ENCODE measurements at regions of chr15 and their contacts with region 1.

Region 1: DNA sequence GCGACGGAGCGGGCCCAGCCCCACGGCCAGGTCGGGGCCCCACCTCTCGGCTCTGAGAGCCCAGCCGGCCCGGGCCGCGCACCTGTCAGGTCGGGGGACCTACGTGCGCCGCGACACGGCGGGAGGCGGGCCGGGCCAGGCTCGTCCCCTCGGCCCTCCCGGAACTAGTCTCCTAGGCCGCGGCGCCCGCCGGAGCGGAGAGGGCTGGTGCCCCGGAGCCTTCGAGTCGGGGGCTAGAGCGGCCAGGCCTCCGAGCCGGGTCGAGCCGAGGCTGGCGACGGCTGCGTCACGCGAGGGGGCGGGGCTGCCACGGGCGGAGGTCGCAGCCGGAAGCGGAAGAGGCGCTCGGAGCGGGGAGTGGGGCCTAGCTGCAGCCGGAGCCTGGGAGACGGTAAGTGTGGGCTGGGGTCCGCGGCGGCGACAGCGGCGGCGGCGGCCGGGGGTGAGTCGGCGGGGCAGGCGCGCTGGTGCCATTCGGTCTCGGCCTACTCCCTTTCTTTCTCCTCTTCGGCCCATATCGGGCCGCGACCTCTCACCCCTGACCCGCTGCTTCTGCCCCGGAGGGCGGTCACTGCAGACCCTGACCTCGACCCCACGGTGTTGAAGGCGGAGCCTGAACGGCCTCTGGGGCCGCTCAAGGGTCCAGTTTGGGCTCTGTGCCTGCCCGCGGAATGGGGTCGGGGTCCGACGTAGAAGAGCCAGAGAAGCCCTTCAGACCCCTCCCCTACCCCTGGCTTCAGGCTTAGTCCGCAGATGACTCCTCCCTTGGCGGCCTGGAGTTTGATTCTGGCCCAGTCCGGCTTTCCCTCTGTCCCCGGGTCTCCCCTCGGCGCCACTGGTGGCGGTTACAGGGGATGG is at the start of gene CLK3:
- DNase-seq: peak; percentile 96 to 98 (median 98)
- ATAC-seq: peak; percentile 70 to 90 (median 85)
- H3K4me3 ChIP-seq: peak within 1 kb of the TSS; percentile 68 to 100 (median 92)
- H3K27ac ChIP-seq: peak within 1 kb of the TSS; percentile 92 to 100 (median 97)
- H3K4me1 ChIP-seq: peaks cover 3 to 70% (median 39%) of the 10 kb centered on the region in 12 donors
- H3K27me3 ChIP-seq: no peaks in the 10 kb centered on the region
- CTCF ChIP-seq: no peak
- POLR2A ChIP-seq: peak in 1 of 2 donors; percentile 85
- total RNA-seq, gene CLK3: 32.8 to 75.9 (median 49.9) TPM

Region 2: DNA sequence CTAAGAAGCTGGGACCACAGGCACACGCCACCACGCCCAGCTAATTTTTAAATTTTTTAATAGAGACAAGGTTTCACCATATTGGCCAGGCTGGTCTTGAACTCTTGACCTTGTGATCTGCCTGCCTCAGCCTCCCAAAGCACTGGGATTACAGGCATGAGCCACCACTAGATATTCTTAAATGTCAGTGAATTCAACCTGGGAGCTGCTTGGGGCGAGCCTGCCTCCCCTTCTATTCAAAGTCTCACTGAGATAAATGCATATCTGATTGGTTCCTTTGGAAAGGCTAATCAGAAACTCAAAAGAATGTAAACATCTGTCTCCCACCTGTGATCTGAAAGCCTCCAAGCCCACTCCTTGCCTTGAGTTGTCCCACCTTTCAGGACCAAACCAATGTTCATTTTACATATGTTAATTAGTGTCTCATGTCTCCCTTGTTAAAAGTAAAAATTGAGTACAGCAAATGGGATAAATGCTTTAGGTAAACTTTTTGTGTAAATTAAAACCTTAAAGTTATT is 263.3 kb before region 1 on chr15:
- intact Hi-C with region 1: no loop called
- DNase-seq: no peak
- ATAC-seq: no peak
- H3K4me3 ChIP-seq: no peak overlapping the region
- H3K27ac ChIP-seq: no peak overlapping the region
- H3K4me1 ChIP-seq: no peaks in the 10 kb centered on the region
- H3K27me3 ChIP-seq: peaks cover 0 to 13% (median 0%) of the 10 kb centered on the region in 9 donors
- CTCF ChIP-seq: no peak
- POLR2A ChIP-seq: no peak

Region 3: DNA sequence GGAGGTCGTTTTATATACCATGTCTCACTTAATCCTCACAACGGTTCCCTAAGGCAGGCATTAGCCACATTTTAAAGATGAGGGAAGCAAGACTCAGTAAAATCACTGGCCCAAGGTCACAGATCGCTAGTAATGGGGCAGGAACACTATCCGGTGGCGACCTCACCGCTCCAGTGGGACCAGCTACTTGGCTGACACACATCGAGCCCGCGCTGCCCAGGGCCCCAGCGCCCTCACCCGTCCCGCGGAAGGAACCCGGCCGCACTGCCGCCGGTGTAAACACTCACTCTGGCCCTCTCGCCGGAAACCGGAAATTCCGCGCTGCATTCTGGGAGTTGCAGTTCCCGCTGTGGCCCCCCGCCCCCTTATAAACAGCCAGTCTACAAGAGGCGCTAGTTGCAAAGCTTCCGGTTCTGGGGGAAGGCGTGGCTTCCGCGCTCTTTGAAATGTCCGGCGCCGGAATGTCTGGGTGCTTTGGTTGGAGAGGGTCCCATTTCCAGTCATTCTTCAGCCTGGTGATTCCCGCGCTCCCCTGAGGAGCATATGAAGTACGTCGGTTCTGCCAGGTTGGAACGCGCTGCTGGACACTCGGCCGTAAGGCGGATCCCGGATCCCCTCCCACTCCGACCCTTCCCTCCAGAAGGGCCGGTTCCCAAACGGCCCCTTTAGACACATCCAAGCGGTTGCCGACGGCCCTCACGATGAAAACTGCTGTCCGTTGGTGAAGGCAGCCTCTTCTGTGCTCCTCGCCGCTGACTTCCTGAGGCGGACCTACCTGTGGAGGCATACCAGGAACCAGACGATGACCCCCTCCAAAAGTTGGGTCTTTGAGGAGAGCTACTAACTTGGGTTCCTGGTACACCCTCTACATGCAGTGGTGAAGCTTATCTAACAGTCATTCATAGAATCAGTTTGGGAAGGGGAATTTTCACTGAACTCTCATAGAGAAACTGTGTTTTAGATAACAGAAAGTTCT is 154.6 kb before region 1 on chr15 and contains the start of gene UBL7:
- intact Hi-C with region 1: loop called in 7 of 10 experiments (anchors 5 to 10 kb)
- DNase-seq: peak; percentile 97 to 98 (median 97)
- ATAC-seq: peak; percentile 99 to 100 (median 100)
- H3K4me3 ChIP-seq: peak within 1 kb of the TSS; percentile 57 to 96 (median 78)
- H3K27ac ChIP-seq: peak within 1 kb of the TSS; percentile 49 to 94 (median 86)
- H3K4me1 ChIP-seq: peaks cover 0 to 22% (median 11%) of the 10 kb centered on the region in 12 donors
- H3K27me3 ChIP-seq: no peaks in the 10 kb centered on the region
- CTCF ChIP-seq: peak in 5 of 12 donors; percentile 19 to 47 (median 32)
- POLR2A ChIP-seq: peak; percentile 27 to 88
- total RNA-seq, gene UBL7: 40.6 to 102 (median 54.5) TPM

Region 4: GRCh38 chr15:74525946-74526345 is 89.8 kb before region 1 on chr15:
- intact Hi-C with region 1: no loop called
- DNase-seq: no peak
- ATAC-seq: no peak
- H3K4me3 ChIP-seq: no peak overlapping the region
- H3K27ac ChIP-seq: no peak overlapping the region
- H3K4me1 ChIP-seq: peaks cover 0 to 8% (median 0%) of the 10 kb centered on the region in 12 donors
- H3K27me3 ChIP-seq: no peaks in the 10 kb centered on the region
- CTCF ChIP-seq: no peak
- POLR2A ChIP-seq: no peak

Region 5: DNA sequence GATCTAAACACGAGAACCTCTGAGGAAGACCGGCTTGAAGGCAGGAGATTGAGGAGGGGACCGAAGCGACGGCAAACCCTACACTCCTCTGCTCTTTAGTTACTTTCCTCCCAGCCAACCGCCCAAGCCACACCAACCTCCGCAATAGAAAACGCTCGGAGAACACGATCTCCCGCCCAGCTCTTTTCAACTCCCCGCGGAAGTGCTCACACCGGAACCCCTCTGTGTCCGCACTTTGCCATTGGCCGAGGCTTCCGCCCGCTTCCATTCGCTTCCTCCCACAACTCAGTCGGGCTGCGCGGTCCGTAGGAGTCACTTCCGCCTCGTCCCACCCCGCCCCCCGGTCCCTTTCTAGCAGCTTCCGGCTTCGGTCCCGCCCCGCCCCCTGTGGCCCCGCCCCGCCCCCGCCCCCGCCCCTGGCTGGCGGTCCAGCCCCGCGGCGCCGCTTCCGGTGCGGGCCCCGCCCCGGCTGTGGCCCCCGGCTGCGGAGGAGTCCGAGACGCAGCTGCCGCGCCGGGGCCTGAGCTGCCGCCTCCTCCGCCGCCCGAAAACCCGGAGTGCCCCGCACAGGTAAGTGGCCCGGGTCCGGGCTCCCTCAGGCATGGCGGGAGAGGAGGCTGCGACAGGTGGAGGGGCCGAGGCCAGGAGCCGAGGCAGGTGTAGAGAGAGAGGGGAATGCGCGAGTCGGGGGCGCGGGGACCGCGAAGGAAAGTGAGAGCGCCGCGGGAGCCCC is 74.8 kb before region 1 on chr15 and contains the start of gene ARID3B:
- intact Hi-C with region 1: loop called in 9 of 10 experiments (anchors 1 to 5 kb)
- DNase-seq: peak; percentile 98 to 99 (median 98)
- ATAC-seq: peak; percentile 99 to 100 (median 100)
- H3K4me3 ChIP-seq: peak within 1 kb of the TSS; percentile 79 to 99 (median 92)
- H3K27ac ChIP-seq: peak within 1 kb of the TSS in 11 of 12 donors; percentile 62 to 88 (median 79)
- H3K4me1 ChIP-seq: peaks cover 0 to 43% (median 20%) of the 10 kb centered on the region in 12 donors
- H3K27me3 ChIP-seq: no peaks in the 10 kb centered on the region
- CTCF ChIP-seq: no peak
- POLR2A ChIP-seq: peak in 1 of 2 donors; percentile 46
- total RNA-seq, gene ARID3B: 1.3 to 4.3 (median 2.6) TPM

Region 6: DNA sequence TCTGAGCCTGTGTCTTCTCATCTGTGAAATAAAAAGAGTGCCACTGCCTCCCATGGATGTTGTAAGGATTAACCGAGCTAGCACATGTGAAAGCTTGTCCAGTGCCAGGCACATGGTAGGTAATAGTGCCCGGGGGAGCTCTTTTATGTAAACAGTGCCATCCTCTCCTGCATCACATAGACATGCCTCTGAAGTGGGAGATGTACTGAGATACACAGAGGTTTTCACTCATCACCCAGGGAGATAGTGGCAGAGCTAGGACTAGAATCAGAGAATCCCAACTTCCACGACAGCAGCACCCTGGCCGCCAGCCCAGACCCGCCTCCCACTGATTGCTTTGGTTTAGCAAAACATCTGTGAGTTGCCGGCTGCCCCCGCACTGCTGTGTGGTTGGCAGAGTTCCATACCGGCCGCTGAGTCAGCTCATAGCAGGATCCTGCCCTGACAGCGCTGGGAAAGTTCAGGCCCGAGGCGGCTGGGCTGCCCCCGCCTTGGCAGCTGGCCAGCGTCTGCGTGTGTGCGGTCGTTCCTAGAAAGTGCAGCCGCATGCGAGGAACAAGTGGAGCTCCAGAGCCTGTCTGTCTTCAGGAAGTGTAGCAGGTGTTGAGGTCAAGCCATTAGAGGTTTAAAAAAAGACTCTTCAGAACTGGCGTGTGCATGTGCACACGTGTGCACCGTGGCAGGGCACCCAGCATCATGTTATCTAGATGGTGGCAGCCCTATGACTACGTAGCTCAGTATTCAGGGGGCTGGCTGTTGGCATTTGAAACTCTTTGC is 69.7 kb before region 1 on chr15:
- intact Hi-C with region 1: loop called in 9 of 10 experiments (anchors 1 to 5 kb)
- DNase-seq: peak; percentile 98 to 99 (median 99)
- ATAC-seq: peak; percentile 94 to 97 (median 95)
- H3K4me3 ChIP-seq: peak overlapping the region in 4 of 12 donors; percentile 8 to 29 (median 20)
- H3K27ac ChIP-seq: peak overlapping the region in 4 of 12 donors; percentile 4 to 35 (median 10)
- H3K4me1 ChIP-seq: peaks cover 0 to 59% (median 26%) of the 10 kb centered on the region in 12 donors
- H3K27me3 ChIP-seq: no peaks in the 10 kb centered on the region
- CTCF ChIP-seq: no peak
- POLR2A ChIP-seq: no peak

Region 7: GRCh38 chr15:74558706-74559105 is 57.0 kb before region 1 on chr15:
- intact Hi-C with region 1: no loop called
- DNase-seq: no peak
- ATAC-seq: no peak
- H3K4me3 ChIP-seq: no peak overlapping the region
- H3K27ac ChIP-seq: no peak overlapping the region
- H3K4me1 ChIP-seq: no peaks in the 10 kb centered on the region
- H3K27me3 ChIP-seq: no peaks in the 10 kb centered on the region
- CTCF ChIP-seq: no peak
- POLR2A ChIP-seq: no peak

Region 8: GRCh38 chr15:74598126-74598842 is 17.5 kb before region 1 on chr15:
- intact Hi-C with region 1: loop called in 4 of 10 experiments (anchors 1 to 2 kb)
- DNase-seq: peak; percentile 96 to 97 (median 96)
- ATAC-seq: peak; percentile 97 to 99 (median 98)
- H3K4me3 ChIP-seq: peak overlapping the region; percentile 45 to 81 (median 68)
- H3K27ac ChIP-seq: peak overlapping the region; percentile 65 to 93 (median 90)
- H3K4me1 ChIP-seq: peaks cover 3 to 39% (median 20%) of the 10 kb centered on the region in 12 donors
- H3K27me3 ChIP-seq: no peaks in the 10 kb centered on the region
- CTCF ChIP-seq: no peak
- POLR2A ChIP-seq: peak; percentile 57 to 92